Panc1 (cell line): ENCODE measurements at regions of chr3 and their contacts with region 1.

Region 1: GRCh38 chr3:186121968-186122367 is 13.1 kb upstream of the ETV5 start:
- DNase-seq: no peak
- ATAC-seq: no peak
- H3K4me3 ChIP-seq: no peak overlapping the region
- H3K27ac ChIP-seq: no peak overlapping the region
- H3K4me1 ChIP-seq: no peaks in the 10 kb centered on the region
- H3K27me3 ChIP-seq: peaks cover 22% of the 10 kb centered on the region
- CTCF ChIP-seq: no peak

Region 2: DNA sequence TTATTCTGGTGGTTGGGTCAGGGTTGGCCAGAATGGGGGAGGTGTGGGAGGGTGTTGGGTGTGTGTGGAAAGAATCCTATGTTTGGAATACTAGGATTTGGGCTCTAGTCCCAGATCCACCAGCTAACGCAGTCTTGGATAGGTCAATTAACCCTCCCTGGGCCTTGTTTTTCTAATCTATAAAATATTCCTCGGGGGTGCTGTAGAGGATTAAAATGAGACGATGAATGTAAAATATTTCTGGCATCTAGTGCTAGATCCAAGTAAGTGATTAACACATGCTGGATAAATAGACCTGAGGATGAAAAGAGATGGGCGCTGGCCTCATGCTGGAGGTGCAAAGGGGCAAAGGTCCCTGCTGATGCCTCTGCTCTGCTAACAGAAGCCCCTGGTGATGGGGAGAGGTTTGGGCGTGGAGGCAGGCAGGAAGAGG is 54.6 kb after region 1 on chr3:
- CTCF ChIA-PET with region 1: no interaction called
- POLR2A ChIA-PET with region 1: interaction called, 17 read pairs
- in situ Hi-C with region 1: no loop called
- intact Hi-C with region 1: no loop called
- DNase-seq: no peak
- ATAC-seq: no peak
- H3K4me3 ChIP-seq: no peak overlapping the region
- H3K27ac ChIP-seq: no peak overlapping the region
- H3K4me1 ChIP-seq: no peaks in the 10 kb centered on the region
- H3K27me3 ChIP-seq: no peaks in the 10 kb centered on the region
- CTCF ChIP-seq: no peak